ENCODE measurements at regions of chr19 and their contacts with region 1.

Region 1: DNA sequence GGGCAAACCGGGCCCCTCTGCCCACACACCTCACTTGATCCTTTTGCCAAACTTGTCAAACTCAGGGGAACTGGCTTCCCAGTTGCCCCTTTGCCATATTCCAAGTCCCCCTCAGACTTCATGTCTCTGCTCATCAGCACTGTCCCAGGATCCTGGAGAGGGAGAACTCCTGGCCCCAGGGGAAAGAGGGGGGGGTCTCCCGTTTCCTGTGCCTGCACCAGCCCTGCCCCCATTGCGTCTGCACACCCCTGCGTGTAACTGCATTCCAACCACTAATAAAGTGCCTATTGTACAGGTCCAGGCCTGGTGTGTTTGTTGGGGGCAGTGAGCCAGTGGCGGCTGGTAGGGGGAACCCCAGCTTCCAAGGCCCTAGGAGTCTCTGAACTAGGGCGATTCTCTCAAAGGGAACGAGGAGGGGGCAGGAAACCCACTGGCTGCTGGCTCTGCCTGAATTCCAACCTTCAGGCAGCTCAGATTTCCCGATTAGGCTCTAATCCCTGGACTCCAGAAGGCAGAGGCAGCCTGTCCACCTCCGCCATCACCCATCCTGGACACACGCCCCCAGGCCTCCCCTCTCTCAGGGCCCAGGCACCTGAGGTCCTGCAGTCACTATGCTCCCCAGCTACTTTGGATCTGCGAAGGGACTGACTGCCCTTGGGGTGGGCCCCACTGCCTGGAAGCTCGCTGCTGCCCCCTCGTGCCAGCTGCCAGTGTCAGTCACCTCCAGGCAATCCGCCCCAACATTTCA is 9.7 kb upstream of the ILF3 start:
- DNase-seq: peak; percentile 73 to 89 (median 81)
- ATAC-seq: peak; percentile 95
- H3K4me3 ChIP-seq: no peak overlapping the region
- H3K4me3 Mint-ChIP-seq: no peak overlapping the region
- H3K27ac ChIP-seq: peak overlapping the region; percentile 35
- H3K27ac Mint-ChIP-seq: peak overlapping the region; percentile 38 to 89 (median 84)
- H3K4me1 ChIP-seq: peaks cover 0 to 8% of the 10 kb centered on the region in 2 donors
- H3K4me1 Mint-ChIP-seq: peaks cover 10 to 36% (median 24%) of the 10 kb centered on the region in 7 donors
- H3K27me3 ChIP-seq: no peaks in the 10 kb centered on the region
- H3K27me3 Mint-ChIP-seq: peaks cover 0 to 2% (median 0%) of the 10 kb centered on the region in 5 donors

Region 2: DNA sequence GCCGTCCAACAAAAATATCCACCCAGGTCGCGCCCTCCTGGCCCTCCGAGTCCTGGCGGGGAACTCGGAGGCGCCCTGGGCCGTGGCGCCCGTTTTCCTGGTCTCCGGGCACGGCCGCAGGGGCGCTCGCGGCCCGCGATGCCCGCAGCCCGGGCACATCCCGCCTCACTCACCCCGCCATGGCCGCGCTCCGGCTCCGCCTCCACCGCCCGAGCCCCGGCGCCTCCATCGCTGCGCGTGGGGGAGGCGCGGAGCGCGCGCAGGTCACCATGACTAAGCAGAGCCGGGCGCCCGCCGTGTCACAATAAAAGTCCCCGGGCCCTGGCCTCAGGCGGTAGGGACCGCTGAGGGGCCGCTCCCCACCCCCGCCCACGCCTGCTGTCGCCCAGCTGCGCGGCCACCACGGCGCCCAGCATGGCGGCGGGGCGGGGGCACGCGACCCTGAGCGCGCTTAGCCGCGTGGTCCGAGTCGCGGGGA is 141.9 kb before region 1 on chr19:
- CTCF ChIA-PET with region 1: interaction called, 3 read pairs
- POLR2A ChIA-PET with region 1: no interaction called
- intact Hi-C with region 1: loop called in 1 of 2 experiments (anchors 2 kb)
- DNase-seq: peak; percentile 71 to 95 (median 81)
- ATAC-seq: peak; percentile 94
- H3K4me3 ChIP-seq: peak overlapping the region; percentile 88
- H3K4me3 Mint-ChIP-seq: peak overlapping the region; percentile 72 to 96 (median 86)
- H3K27ac ChIP-seq: peak overlapping the region; percentile 83
- H3K27ac Mint-ChIP-seq: peak overlapping the region in 8 of 9 donors; percentile 69 to 91 (median 78)
- H3K4me1 ChIP-seq: peaks cover under 1 to 8% of the 10 kb centered on the region in 2 donors
- H3K4me1 Mint-ChIP-seq: peaks cover 22 to 42% (median 36%) of the 10 kb centered on the region in 7 donors
- H3K27me3 ChIP-seq: no peaks in the 10 kb centered on the region
- H3K27me3 Mint-ChIP-seq: peaks cover 0 to 3% (median 0%) of the 10 kb centered on the region in 5 donors

Region 3: GRCh38 chr19:10593820-10594637 is 50.4 kb before region 1 on chr19:
- CTCF ChIA-PET with region 1: interaction called, 12 read pairs
- POLR2A ChIA-PET with region 1: interaction called, 4 read pairs
- intact Hi-C with region 1: no loop called
- DNase-seq: no peak
- ATAC-seq: no peak
- H3K4me3 ChIP-seq: no peak overlapping the region
- H3K4me3 Mint-ChIP-seq: peak overlapping the region in 1 of 10 donors; percentile 41
- H3K27ac ChIP-seq: no peak overlapping the region
- H3K27ac Mint-ChIP-seq: peak overlapping the region in 1 of 9 donors; percentile 78
- H3K4me1 ChIP-seq: peaks cover 12 to 13% of the 10 kb centered on the region in 2 donors
- H3K4me1 Mint-ChIP-seq: peaks cover 6 to 22% (median 16%) of the 10 kb centered on the region in 7 donors
- H3K27me3 ChIP-seq: no peaks in the 10 kb centered on the region
- H3K27me3 Mint-ChIP-seq: peaks cover 0 to 4% (median 0%) of the 10 kb centered on the region in 5 donors

Region 4: GRCh38 chr19:10625003-10625776 is 19.2 kb before region 1 on chr19 and contains the start of gene SLC44A2:
- CTCF ChIA-PET with region 1: interaction called, 6 read pairs
- POLR2A ChIA-PET with region 1: interaction called, 5 read pairs
- intact Hi-C with region 1: loop called in 1 of 2 experiments (anchors 1 kb)
- DNase-seq: no peak
- ATAC-seq: no peak
- H3K4me3 ChIP-seq: no peak within 1 kb of the TSS
- H3K4me3 Mint-ChIP-seq: peak within 1 kb of the TSS; percentile 27 to 66 (median 56)
- H3K27ac ChIP-seq: peak within 1 kb of the TSS; percentile 51
- H3K27ac Mint-ChIP-seq: peak within 1 kb of the TSS; percentile 71 to 90 (median 87)
- H3K4me1 ChIP-seq: peaks cover 10 to 14% of the 10 kb centered on the region in 2 donors
- H3K4me1 Mint-ChIP-seq: peaks cover 35 to 51% (median 40%) of the 10 kb centered on the region in 7 donors
- H3K27me3 ChIP-seq: no peaks in the 10 kb centered on the region
- H3K27me3 Mint-ChIP-seq: no peaks in the 10 kb centered on the region
- total RNA-seq, gene SLC44A2: 148 to 272 (median 194) TPM

Region 5: GRCh38 chr19:10695401-10696398 is 51.3 kb after region 1 on chr19:
- CTCF ChIA-PET with region 1: interaction called, 5 read pairs
- POLR2A ChIA-PET with region 1: interaction called, 5 read pairs
- intact Hi-C with region 1: loop called in 1 of 2 experiments (anchors 1 kb)
- DNase-seq: peak; percentile 79 to 90 (median 85)
- ATAC-seq: peak; percentile 99
- H3K4me3 ChIP-seq: peak overlapping the region; percentile 36
- H3K4me3 Mint-ChIP-seq: peak overlapping the region; percentile 81 to 89 (median 86)
- H3K27ac ChIP-seq: no peak overlapping the region
- H3K27ac Mint-ChIP-seq: peak overlapping the region in 8 of 9 donors; percentile 9 to 88 (median 56)
- H3K4me1 ChIP-seq: peaks cover 4 to 10% of the 10 kb centered on the region in 2 donors
- H3K4me1 Mint-ChIP-seq: peaks cover 12 to 25% (median 21%) of the 10 kb centered on the region in 7 donors
- H3K27me3 ChIP-seq: no peaks in the 10 kb centered on the region
- H3K27me3 Mint-ChIP-seq: peaks cover 0 to 11% (median 0%) of the 10 kb centered on the region in 5 donors

Region 6: GRCh38 chr19:10891405-10892086 is 247.1 kb after region 1 on chr19:
- CTCF ChIA-PET with region 1: no interaction called
- POLR2A ChIA-PET with region 1: no interaction called
- intact Hi-C with region 1: no loop called
- DNase-seq: no peak
- ATAC-seq: no peak
- H3K4me3 ChIP-seq: no peak overlapping the region
- H3K4me3 Mint-ChIP-seq: no peak overlapping the region
- H3K27ac ChIP-seq: no peak overlapping the region
- H3K27ac Mint-ChIP-seq: peak overlapping the region in 1 of 9 donors; percentile 21
- H3K4me1 ChIP-seq: no peaks in the 10 kb centered on the region
- H3K4me1 Mint-ChIP-seq: peaks cover 8 to 26% (median 12%) of the 10 kb centered on the region in 7 donors
- H3K27me3 ChIP-seq: no peaks in the 10 kb centered on the region
- H3K27me3 Mint-ChIP-seq: no peaks in the 10 kb centered on the region